A549 (cell line): ENCODE measurements at regions of chr7 and their contacts with region 1.

Region 1: DNA sequence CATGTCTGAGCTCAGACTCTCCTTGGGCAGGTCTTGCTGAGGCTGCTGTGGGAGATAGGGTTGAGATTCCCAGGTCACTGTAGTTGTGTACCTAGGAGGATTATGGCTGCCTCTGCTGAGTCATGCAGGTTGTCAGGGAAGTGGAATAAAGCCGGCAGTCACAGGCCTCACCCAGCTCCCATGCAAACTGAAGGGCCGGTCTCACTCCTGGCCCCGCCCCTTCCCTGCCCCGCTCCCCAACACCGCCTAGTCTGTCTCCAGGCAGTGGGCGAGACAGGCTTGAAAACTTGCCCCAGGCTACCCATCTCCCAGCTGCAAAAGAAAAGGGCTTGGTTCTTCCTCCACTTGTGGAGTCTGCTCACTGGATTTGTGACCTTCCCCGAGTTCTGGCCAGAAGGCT is 41.6 kb upstream of the SDHAF3 start:
- DNase-seq: peak in 1 of 2 experiments; percentile 12
- ATAC-seq: no peak
- H3K4me3 ChIP-seq: no peak overlapping the region
- H3K27ac ChIP-seq: no peak overlapping the region
- H3K4me1 ChIP-seq: no peaks in the 10 kb centered on the region
- CTCF ChIP-seq: no peak
- EP300 ChIP-seq: no peak
- POLR2A ChIP-seq: no peak
- RAD21 ChIP-seq: no peak

Region 2: GRCh38 chr7:97064967-97065587 is 10.9 kb before region 1 on chr7:
- CTCF ChIA-PET with region 1: interaction called, 13 read pairs
- POLR2A ChIA-PET with region 1: no interaction called
- DNase-seq: peak; percentile 37 to 59
- ATAC-seq: peak; percentile 91 to 98
- H3K4me3 ChIP-seq: no peak overlapping the region
- H3K27ac ChIP-seq: no peak overlapping the region
- H3K4me1 ChIP-seq: no peaks in the 10 kb centered on the region
- CTCF ChIP-seq: peak; percentile 76
- EP300 ChIP-seq: no peak
- POLR2A ChIP-seq: no peak
- RAD21 ChIP-seq: peak; percentile 39 to 44; a peak in 3 of 5 replicates

Region 3: DNA sequence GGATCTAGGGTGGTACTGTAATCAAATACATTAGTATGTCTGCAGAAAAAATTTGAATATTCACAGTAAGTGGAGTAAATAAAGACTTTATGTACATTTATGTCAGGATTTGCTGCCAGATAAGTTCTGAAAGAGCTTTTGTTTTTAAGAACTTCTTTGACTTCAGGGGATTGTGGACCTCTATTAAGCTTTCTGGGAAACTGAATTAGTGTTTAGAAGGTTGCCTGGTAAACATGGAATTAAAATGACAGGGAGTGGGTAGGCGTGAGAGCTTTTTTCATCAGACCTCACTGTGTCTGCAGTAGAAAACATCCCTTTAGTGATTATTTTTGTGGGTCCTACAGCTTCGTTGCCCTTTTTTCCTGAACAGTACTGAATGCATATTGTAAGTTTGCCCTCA is 57.2 kb after region 1 on chr7:
- CTCF ChIA-PET with region 1: no interaction called
- POLR2A ChIA-PET with region 1: no interaction called
- DNase-seq: no peak
- ATAC-seq: no peak
- H3K4me3 ChIP-seq: no peak overlapping the region
- H3K27ac ChIP-seq: no peak overlapping the region
- H3K4me1 ChIP-seq: no peaks in the 10 kb centered on the region
- CTCF ChIP-seq: no peak
- EP300 ChIP-seq: no peak
- POLR2A ChIP-seq: no peak
- RAD21 ChIP-seq: no peak